B cell (primary cell): ENCODE measurements at regions of chr6 and their contacts with region 1.

Region 1: DNA sequence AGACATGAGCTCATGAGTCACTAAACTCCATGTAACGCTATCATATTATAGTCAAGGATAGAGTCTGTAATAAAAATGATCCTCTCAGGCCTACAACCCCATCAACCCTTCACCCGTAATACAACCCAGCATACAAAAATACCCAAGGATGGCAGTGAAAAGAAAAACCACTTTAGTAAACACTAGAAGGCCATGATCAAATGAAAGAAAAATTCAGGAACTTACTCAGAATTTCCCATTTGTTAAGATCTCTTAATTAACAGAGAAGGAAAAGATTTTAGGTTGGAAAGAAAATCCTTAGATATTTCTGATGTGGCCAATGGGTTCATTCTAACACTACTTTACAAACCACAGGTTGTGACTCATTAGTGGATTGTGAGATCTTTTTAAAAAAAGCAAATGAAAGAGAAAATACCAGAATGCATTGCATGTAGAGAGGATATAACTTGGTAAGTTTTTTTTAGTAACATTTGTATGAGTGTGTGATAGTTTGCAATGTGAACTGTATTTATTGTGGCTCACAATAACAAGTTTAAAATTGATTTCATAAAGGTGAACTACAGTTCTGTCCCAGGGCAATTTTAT is 8.0 kb upstream of the UBE2J1 start:
- DNase-seq: no peak
- ATAC-seq: no peak
- H3K4me3 ChIP-seq: no peak overlapping the region
- H3K4me3 Mint-ChIP-seq: peak overlapping the region; percentile 8
- H3K27ac ChIP-seq: peak overlapping the region in 1 of 2 donors; percentile 22
- H3K27ac Mint-ChIP-seq: peak overlapping the region; percentile 80
- H3K4me1 ChIP-seq: peaks cover 47 to 65% of the 10 kb centered on the region in 2 donors
- H3K4me1 Mint-ChIP-seq: peaks cover 75% of the 10 kb centered on the region
- H3K27me3 ChIP-seq: no peaks in the 10 kb centered on the region
- H3K27me3 Mint-ChIP-seq: no peaks in the 10 kb centered on the region
- CTCF ChIP-seq: no peak

Region 2: DNA sequence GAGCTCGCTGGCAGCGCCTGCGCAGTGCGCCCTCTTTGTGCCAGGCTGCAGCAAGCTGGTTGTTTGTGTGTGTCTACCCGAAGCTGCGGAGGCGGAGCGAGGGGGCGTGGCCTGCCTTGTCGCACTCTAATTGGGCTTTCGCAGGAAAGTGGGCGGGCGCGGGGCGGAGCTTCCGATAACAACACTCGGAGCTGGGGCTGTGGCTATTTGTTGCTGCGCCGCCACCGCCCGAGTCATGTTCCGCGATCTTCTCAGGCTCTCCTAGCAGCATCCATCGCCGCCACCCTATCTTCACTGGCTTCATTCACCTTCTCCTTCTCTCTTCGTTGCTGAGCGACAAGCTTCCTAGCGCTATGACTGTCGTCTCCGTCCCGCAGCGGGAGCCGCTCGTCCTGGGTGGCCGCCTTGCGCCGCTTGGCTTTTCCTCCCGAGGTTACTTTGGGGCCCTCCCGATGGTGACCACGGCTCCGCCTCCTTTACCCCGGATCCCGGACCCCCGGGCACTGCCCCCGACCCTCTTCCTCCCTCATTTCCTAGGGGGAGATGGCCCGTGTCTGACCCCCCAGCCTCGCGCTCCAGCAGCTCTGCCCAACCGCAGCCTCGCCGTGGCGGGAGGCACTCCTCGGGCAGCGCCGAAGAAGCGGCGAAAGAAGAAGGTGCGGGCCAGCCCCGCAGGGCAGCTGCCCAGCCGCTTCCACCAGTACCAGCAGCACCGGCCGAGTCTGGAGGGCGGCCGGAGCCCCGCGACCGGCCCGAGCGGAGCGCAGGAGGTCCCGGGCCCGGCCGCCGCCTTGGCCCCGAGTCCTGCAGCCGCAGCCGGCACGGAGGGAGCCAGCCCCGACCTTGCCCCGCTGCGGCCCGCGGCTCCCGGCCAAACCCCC is 279.7 kb before region 1 on chr6 and contains the start of gene PNRC1:
- CTCF ChIA-PET with region 1: interaction called, 3 read pairs
- POLR2A ChIA-PET with region 1: interaction called, 10 read pairs
- intact Hi-C with region 1: no loop called
- DNase-seq: peak; percentile 100
- ATAC-seq: peak; percentile 76
- H3K4me3 ChIP-seq: peak within 1 kb of the TSS; percentile 81 to 100 (median 98)
- H3K4me3 Mint-ChIP-seq: peak within 1 kb of the TSS; percentile 99
- H3K27ac ChIP-seq: peak within 1 kb of the TSS; percentile 99
- H3K27ac Mint-ChIP-seq: peak within 1 kb of the TSS; percentile 98
- H3K4me1 ChIP-seq: peaks cover 25 to 29% of the 10 kb centered on the region in 2 donors
- H3K4me1 Mint-ChIP-seq: peaks cover 38% of the 10 kb centered on the region
- H3K27me3 ChIP-seq: no peaks in the 10 kb centered on the region
- H3K27me3 Mint-ChIP-seq: no peaks in the 10 kb centered on the region
- CTCF ChIP-seq: no peak
- total RNA-seq, gene PNRC1: 460 and 486 TPM in 2 replicates

Region 3: DNA sequence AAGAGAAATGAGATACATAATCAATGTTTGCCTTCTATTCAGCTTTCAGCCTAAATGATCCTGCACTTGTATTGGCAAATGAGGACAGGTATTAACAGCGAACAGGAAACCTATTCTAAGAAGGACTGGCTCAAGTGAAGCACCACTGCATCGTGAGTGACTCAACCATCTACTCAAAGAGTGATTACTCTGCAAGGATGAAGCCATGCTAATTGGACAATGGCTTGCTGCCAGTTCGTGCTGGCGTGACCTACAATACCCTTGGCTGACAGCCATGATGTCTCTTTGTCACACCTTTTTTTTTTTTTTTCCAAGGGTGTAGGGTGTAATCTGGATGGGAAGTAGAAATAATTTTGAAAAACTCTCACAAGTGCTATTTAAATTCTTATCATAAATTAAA is 638.6 kb after region 1 on chr6:
- CTCF ChIA-PET with region 1: no interaction called
- POLR2A ChIA-PET with region 1: no interaction called
- intact Hi-C with region 1: no loop called
- DNase-seq: no peak
- ATAC-seq: no peak
- H3K4me3 ChIP-seq: no peak overlapping the region
- H3K4me3 Mint-ChIP-seq: no peak overlapping the region
- H3K27ac ChIP-seq: peak overlapping the region in 1 of 2 donors; percentile 4
- H3K27ac Mint-ChIP-seq: no peak overlapping the region
- H3K4me1 ChIP-seq: no peaks in the 10 kb centered on the region
- H3K4me1 Mint-ChIP-seq: peaks cover 29% of the 10 kb centered on the region
- H3K27me3 ChIP-seq: no peaks in the 10 kb centered on the region
- H3K27me3 Mint-ChIP-seq: no peaks in the 10 kb centered on the region
- CTCF ChIP-seq: no peak